Mammary epithelial cell (primary cell): ENCODE measurements at regions of chr10 and their contacts with region 1.

Region 1: DNA sequence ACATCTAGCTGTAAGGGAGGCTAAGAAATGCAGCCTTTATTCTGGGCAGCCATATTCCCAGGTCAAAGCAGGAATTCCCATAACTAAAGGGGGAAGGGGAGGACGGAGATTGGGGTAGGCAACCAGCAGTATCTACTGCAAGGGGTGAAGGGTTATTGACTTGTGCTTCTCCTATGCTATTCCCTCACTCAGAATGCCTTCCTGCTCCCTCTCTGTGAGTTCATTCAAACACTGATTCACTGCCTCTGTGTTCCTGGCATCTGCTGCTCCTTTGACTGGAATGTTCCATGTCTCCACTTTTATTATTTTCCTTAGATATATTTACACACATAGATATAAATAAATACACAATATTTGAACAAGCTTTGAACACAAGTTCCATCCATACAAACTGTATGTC is 11.1 kb downstream of the HTR7 start:
- DNase-seq: peak; percentile 48
- H3K4me3 ChIP-seq: peak overlapping the region in 1 of 3 experiments; percentile 8
- H3K27ac ChIP-seq: peak overlapping the region; percentile 98
- H3K4me1 ChIP-seq: peaks cover 47% of the 10 kb centered on the region
- H3K27me3 ChIP-seq: no peaks in the 10 kb centered on the region
- CTCF ChIP-seq: no peak

Region 2: GRCh38 chr10:90579602-90580242 is 267.0 kb before region 1 on chr10:
- CTCF ChIA-PET with region 1: no interaction called
- dilution Hi-C with region 1: no loop called
- in situ Hi-C with region 1: no loop called
- intact Hi-C with region 1: no loop called
- DNase-seq: peak; percentile 71
- H3K4me3 ChIP-seq: no peak overlapping the region
- H3K27ac ChIP-seq: no peak overlapping the region
- H3K4me1 ChIP-seq: peaks cover 7% of the 10 kb centered on the region
- H3K27me3 ChIP-seq: no peaks in the 10 kb centered on the region
- CTCF ChIP-seq: peak; percentile 36 to 40

Region 3: DNA sequence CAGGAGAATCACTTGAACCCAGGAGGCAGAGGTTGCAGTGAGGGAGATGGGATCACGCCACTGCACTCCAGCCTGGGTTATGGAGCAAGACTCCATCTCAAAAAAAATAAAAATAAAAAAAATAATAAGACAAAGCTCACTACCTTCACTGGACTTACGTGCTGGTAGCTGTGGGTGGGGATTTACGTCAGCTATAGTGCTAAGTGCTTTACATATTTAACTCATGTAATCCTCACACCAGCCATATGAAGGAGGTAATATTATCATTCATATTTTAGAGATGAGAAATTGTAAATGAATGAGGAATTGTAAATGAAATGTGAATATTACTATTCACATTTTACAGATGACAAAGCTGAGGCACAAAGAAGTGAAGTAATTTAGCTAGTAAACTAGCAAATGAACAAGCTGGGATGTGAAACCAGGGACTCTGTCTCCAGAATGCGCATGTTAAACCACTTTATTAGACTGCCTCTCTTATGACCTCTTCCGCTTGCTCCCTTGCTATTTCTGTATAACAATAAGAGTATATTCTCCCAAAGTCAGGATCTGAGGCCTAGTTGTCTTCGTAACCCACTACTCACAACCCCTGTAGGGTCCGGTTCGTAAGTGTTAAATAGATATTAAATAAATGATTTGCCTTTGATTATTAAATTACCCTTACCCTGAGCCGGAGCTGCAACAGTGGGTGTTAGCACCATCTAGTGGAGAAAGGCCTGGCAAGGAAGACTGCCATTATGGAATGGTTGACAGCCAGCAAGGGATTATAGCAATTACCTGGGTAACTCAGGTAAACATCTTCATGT is 59.1 kb before region 1 on chr10:
- CTCF ChIA-PET with region 1: interaction called, 5 read pairs
- dilution Hi-C with region 1: loop called (anchors 5 kb)
- in situ Hi-C with region 1: loop called in 1 of 2 experiments (anchors 10 kb)
- intact Hi-C with region 1: no loop called
- DNase-seq: peak; percentile 27
- H3K4me3 ChIP-seq: no peak overlapping the region
- H3K27ac ChIP-seq: no peak overlapping the region
- H3K4me1 ChIP-seq: no peaks in the 10 kb centered on the region
- H3K27me3 ChIP-seq: no peaks in the 10 kb centered on the region
- CTCF ChIP-seq: peak; percentile 84 to 97

Region 4: DNA sequence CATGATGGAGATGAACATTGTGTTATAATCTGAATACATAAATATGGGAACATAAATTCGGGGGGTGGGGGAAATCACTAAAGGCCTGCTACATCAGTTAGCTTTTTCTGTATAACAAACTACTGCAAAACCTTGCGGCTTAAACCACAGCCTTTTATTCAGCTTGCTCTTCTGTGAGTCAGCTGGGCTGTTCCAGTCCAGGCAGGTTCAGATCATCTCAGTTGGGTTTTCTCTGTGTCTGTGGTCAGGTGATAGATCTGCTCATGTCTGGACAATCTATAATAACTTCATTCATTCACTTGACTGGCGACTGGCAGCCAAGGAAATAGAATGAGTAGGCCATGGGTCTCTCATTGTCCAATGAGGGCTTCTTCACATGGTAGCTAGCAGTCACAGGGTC is 12.4 kb before region 1 on chr10:
- CTCF ChIA-PET with region 1: interaction called, 7 read pairs
- dilution Hi-C with region 1: no loop called
- in situ Hi-C with region 1: no loop called
- intact Hi-C with region 1: loop called (anchors 1 kb)
- DNase-seq: peak; percentile 98
- H3K4me3 ChIP-seq: no peak overlapping the region
- H3K27ac ChIP-seq: peak overlapping the region; percentile 76
- H3K4me1 ChIP-seq: peaks cover 43% of the 10 kb centered on the region
- H3K27me3 ChIP-seq: no peaks in the 10 kb centered on the region
- CTCF ChIP-seq: no peak